ENCODE measurements at regions of chr4 and their contacts with region 1.

Region 1: GRCh38 chr4:47017494-47017893 is 13.9 kb upstream of the GABRB1 start:
- DNase-seq: no peak
- H3K4me3 ChIP-seq: no peak overlapping the region
- CTCF ChIP-seq: no peak

Region 2: GRCh38 chr4:47032415-47033106 is 15.1 kb after region 1 on chr4:
- CTCF ChIA-PET with region 1: interaction called, 12 read pairs
- POLR2A ChIA-PET with region 1: no interaction called
- DNase-seq: no peak
- H3K4me3 ChIP-seq: peak overlapping the region; percentile 67
- CTCF ChIP-seq: peak; percentile 91

Region 3: DNA sequence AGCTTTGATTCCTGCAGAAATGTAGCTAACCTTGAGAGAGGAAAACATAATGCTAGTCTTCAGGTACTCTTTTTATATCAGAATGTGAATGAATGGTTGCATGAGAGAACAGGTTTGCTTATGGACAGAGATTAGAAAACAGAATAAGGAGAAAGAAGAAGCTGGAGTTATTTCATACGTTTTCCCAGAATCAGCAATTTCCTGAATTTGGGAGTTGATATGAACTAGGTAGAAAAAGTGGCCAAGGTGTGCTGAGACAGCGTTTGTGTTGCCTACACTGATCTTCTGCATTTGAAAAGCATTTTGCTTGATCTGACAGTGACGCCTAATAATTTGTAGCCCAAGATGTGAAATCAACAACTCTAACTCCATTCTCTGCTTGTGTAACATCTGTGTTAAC is 26.3 kb after region 1 on chr4:
- CTCF ChIA-PET with region 1: no interaction called
- POLR2A ChIA-PET with region 1: no interaction called
- DNase-seq: no peak
- H3K4me3 ChIP-seq: no peak overlapping the region
- CTCF ChIP-seq: no peak